Head of caudate nucleus (tissue), 42 donors: ENCODE measurements at regions of chr17 and their contacts with region 1.

Region 1: GRCh38 chr17:68457539-68458259 is 403 bp upstream of the WIPI1 start:
- DNase-seq: peak; percentile 98 to 100 (median 99)

Region 2: DNA sequence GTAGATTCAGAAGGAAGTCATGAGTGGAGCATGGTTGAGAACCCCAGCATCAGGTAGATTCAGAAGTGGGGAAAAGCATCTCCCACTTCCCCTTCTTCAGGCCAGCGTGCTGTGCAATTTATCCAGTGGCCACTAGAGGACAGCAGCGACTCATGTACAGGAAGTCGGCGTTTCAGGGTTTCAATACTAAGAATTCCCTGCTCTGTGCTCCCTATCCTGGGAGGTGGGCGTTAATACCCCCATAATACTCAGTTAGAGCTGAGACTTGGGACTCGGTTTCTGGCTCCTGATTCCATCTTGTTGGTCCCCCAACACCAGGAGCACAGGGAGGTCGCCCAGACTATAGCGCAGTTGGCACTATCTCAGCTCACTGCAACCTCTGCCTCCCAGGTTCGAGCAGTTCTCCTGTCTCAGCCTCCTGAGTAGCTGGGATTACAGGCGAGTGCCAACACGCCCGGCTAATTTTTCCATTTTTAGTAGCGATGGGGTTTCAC is 285.2 kb before region 1 on chr17:
- intact Hi-C with region 1: loop called (anchors 10 kb)
- DNase-seq: peak; percentile 21 to 91 (median 76)

Region 3: DNA sequence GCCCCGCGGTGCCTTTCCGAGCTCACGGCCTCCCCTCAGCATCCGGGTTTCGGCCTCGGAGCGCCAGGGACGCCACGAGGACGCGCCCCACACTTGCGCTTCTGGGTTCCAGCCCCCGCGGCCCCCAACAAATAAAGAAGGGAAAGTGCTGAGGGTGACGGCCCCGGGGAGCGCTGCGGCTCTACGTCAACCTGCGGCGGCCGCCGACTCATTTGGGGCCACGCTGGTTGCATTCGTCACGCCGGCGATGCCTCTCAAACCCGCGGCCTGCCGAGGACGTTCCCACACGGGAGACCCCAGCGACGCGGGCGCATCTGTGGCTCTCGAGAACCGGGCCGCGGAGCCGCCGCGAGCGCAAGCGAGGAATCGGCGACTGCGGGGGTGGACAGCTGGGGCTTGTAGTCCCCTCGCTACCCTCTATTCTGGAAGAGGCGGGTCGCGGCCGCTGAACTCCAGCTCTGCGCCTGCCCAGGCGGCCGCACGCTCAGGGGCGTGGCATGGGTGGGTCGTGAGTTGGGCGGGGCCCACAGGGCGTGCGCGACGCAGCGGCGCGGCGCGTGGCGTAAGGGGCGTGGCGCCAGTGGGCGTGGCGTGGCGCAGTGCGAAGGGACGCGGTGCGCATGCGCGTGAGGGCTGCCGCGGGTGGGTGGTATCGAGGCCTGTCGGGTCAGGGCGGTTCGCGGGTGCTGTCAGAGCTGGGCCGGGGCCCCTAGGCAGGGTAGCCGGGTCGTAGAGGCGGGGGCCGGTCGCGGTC is 210.1 kb before region 1 on chr17 and contains the start of gene AMZ2:
- intact Hi-C with region 1: loop called (anchors 1 kb)
- DNase-seq: peak; percentile 80 to 99 (median 96)

Region 4: DNA sequence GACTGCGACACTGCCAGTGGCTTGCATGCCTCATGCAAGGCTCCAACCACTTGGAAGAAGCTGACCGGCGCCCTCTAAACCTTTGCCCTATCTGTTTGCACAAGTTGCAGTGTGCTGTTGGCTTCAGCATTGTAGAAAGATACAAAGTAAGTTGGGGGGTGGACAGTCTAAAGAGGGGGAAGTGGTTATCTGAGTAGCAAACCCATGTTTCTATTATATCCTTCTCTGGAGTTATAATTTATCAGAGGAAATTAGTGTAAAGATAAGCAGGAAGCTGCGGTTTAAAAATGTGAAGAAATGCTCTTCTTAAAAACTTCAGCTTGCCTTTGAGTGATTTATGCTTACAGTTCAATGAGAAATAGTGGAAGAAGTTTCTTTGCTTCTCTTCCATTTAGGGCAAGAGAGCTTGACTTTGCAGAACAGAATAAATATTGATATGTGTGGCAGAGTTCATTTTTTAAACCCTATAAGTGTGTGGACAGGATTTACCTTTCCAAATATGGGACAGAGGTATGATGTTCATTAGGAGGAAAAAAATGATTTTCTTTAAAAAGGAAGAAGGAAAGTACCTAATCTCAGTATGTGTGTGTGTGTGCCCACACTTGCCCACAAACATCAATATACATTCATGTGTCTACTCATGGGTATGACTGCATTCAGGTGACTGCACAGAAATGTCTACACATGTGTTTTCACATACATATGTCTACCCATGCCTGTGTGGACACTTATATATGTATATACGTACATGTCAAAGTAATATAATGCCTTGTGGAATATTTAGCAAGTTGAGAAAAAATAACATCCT is 201.8 kb before region 1 on chr17:
- intact Hi-C with region 1: loop called (anchors 5 kb)
- DNase-seq: no peak

Region 5: GRCh38 chr17:68334401-68334800 is 123.3 kb before region 1 on chr17:
- intact Hi-C with region 1: no loop called
- DNase-seq: no peak

Region 6: DNA sequence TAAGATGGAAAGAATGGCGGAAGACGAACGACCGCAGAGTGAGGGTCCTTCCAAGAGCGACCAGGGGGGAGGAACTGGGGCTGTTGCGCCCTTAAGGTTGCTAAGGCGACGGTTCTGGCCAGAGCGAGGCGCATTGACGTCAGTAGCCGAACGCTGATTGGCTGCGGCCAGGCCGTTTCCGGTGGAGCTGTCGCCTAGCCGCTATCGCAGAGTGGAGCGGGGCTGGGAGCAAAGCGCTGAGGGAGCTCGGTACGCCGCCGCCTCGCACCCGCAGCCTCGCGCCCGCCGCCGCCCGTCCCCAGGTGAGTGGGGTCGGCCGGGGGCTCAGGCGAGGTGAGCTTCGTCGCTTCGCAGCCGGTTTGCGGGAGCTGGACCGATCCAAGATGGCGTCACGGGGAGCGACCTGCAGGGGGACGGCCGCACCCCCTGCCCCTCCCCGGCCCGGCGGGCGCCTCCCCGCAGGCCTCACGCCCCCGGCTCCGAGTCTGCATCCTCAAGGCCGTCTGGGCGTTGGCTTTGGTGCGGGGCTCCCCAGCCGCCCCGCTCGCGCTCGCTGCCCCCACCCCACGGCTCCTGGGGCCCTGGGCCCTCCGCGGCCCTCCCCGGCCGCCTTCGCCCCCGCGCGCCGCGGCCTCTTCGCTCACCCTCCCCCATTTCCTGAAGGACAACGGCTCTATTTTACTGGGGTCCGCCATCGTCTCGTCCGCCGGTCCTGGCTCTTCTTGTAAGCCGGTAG is 54.7 kb after region 1 on chr17 and contains the start of gene PRKAR1A:
- intact Hi-C with region 1: loop called (anchors 5 kb)
- DNase-seq: peak; percentile 94 to 100 (median 98)

Region 7: DNA sequence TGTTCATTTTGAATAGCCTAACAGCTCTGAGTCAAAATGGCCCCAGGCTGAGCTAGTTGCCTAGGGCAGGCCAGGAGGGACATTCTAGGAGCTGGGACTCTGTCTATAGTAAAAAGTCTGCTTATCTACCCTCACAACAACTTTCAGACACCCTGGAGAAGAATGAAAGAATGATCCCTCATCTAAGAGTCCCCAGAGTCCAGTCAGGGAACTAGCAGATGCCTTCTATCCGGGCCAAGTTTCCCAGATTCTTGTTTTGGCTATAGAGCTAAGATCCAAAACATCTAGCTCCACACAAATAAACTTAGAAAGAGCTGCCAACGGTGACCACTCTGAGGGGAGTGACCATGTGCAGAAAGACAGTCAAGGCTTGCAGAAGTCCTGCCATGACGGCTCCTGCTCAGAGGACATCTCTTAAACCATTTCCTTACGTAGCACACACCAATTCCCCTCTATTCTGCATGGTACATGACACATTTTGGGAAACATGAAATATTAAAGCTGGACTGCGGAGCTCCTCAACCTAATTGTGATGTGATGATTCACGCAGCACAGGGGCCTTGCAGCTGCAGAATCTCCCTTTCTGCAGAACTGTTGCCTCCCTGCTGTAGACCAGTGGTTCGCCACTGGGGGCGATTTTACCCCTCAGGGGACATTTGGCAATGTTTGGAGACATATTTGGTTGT is 119.3 kb after region 1 on chr17:
- intact Hi-C with region 1: no loop called
- DNase-seq: no peak